Heart left ventricle (tissue), 16 donors: ENCODE measurements at regions of chr7 and their contacts with region 1.

Region 1: GRCh38 chr7:35906191-35906908 is 105.5 kb downstream of the SEPTIN7 start:
- DNase-seq: peak in 4 of 5 donors; percentile 31 to 61 (median 48)
- ATAC-seq: peak; percentile 72 to 91 (median 88)
- H3K4me3 ChIP-seq: no peak overlapping the region
- H3K27ac ChIP-seq: no peak overlapping the region
- H3K4me1 ChIP-seq: peaks cover 0 to 21% (median 5%) of the 10 kb centered on the region in 12 donors
- H3K27me3 ChIP-seq: no peaks in the 10 kb centered on the region
- CTCF ChIP-seq: peak; percentile 83 to 97 (median 94)
- POLR2A ChIP-seq: no peak

Region 2: GRCh38 chr7:35975851-35976454 is 69.6 kb after region 1 on chr7:
- intact Hi-C with region 1: loop called in 1 of 10 experiments (anchors 10 kb)
- DNase-seq: peak in 1 of 5 donors; percentile 33
- ATAC-seq: peak; percentile 69 to 87 (median 82)
- H3K4me3 ChIP-seq: no peak overlapping the region
- H3K27ac ChIP-seq: no peak overlapping the region
- H3K4me1 ChIP-seq: peaks cover 0 to 7% (median 0%) of the 10 kb centered on the region in 12 donors
- H3K27me3 ChIP-seq: peaks cover 0 to 19% (median 0%) of the 10 kb centered on the region in 9 donors
- CTCF ChIP-seq: peak; percentile 80 to 88 (median 84)
- POLR2A ChIP-seq: no peak

Region 3: GRCh38 chr7:36312344-36313334 is 406.3 kb after region 1 on chr7:
- intact Hi-C with region 1: loop called in 1 of 10 experiments (anchors 10 kb)
- DNase-seq: no peak
- ATAC-seq: no peak
- H3K4me3 ChIP-seq: no peak overlapping the region
- H3K27ac ChIP-seq: no peak overlapping the region
- H3K4me1 ChIP-seq: peaks cover 0 to 15% (median 4%) of the 10 kb centered on the region in 12 donors
- H3K27me3 ChIP-seq: no peaks in the 10 kb centered on the region
- CTCF ChIP-seq: no peak
- POLR2A ChIP-seq: no peak